Activated CD4-positive, alpha-beta T cell treated with anti-CD3 and anti-CD28 coated beads for 36 hours (primary cell): ENCODE measurements at regions of chr3 and their contacts with region 1.

Region 1: GRCh38 chr3:129316131-129317013 is 37.7 kb downstream of the HMCES start:
- DNase-seq: peak; percentile 93
- ATAC-seq: peak; percentile 39
- H3K4me3 Mint-ChIP-seq: peak overlapping the region; percentile 88
- H3K27ac Mint-ChIP-seq: peak overlapping the region; percentile 58
- H3K4me1 Mint-ChIP-seq: peaks cover 22% of the 10 kb centered on the region
- H3K27me3 Mint-ChIP-seq: no peaks in the 10 kb centered on the region

Region 2: GRCh38 chr3:128607710-128608048 is 708.7 kb before region 1 on chr3:
- CTCF ChIA-PET with region 1: no interaction called
- POLR2A ChIA-PET with region 1: no interaction called
- intact Hi-C with region 1: no loop called
- DNase-seq: no peak
- ATAC-seq: no peak
- H3K4me3 Mint-ChIP-seq: no peak overlapping the region
- H3K27ac Mint-ChIP-seq: no peak overlapping the region
- H3K4me1 Mint-ChIP-seq: no peaks in the 10 kb centered on the region
- H3K27me3 Mint-ChIP-seq: no peaks in the 10 kb centered on the region

Region 3: GRCh38 chr3:129026728-129027543 is 289.4 kb before region 1 on chr3:
- CTCF ChIA-PET with region 1: no interaction called
- POLR2A ChIA-PET with region 1: interaction called, 4 read pairs
- intact Hi-C with region 1: loop called in 1 of 2 experiments (anchors 2 kb)
- DNase-seq: peak; percentile 96
- ATAC-seq: peak; percentile 100
- H3K4me3 Mint-ChIP-seq: peak overlapping the region; percentile 72
- H3K27ac Mint-ChIP-seq: peak overlapping the region; percentile 81
- H3K4me1 Mint-ChIP-seq: peaks cover 12% of the 10 kb centered on the region
- H3K27me3 Mint-ChIP-seq: no peaks in the 10 kb centered on the region

Region 4: DNA sequence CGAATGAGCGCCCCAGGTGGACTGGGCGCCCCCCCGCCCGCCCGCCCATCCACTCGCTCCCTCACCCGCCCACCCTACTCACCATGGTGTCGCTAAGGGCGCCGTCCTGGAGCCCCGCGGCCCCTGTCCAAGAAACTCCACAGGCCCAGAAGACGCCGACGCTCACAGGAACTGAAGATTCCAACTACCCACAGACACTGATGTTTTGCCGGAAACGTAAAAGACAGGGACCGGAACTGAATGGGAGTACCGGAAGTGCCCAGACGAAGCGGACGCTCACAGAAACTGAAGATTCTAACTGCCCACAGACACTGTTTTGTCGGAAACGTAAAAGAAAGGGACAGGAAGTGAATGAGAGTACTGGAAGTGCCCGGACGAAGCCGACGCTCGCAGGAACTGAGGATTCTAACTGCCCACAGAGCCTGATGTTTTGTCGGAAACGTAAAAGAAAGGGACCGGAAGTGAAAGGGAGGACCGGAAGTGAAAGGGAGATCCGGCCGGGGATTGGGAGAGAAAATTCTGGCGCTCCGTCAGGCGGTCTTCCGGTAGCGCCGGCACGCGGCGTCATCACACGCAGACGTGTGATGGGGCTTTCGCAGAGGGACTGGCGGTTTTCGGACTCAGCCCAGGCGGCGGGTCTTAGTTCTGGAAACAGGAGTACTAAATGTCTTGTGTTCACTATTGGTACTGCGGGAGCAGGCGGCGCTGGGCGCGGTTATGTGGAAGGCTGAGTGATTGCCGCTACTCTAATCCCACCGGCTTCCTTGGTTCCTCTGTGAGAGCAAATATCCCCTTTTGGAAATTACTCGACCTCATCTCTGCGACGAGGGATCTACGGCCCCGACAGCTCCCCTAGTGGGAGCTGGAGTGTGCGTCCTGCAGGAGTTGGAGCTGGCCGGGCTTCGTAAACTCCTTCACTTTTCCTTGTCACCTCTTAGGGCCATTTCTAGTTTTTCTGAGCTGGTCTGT is 155.2 kb before region 1 on chr3 and contains the start of gene ISY1:
- CTCF ChIA-PET with region 1: interaction called, 5 read pairs
- POLR2A ChIA-PET with region 1: no interaction called
- intact Hi-C with region 1: loop called in 1 of 2 experiments (anchors 1 kb)
- DNase-seq: peak; percentile 93
- ATAC-seq: peak; percentile 81
- H3K4me3 Mint-ChIP-seq: peak within 1 kb of the TSS; percentile 93
- H3K27ac Mint-ChIP-seq: peak within 1 kb of the TSS; percentile 98
- H3K4me1 Mint-ChIP-seq: peaks cover 30% of the 10 kb centered on the region
- H3K27me3 Mint-ChIP-seq: no peaks in the 10 kb centered on the region
- total RNA-seq, gene ISY1: 44.9 to 65.5 TPM

Region 5: DNA sequence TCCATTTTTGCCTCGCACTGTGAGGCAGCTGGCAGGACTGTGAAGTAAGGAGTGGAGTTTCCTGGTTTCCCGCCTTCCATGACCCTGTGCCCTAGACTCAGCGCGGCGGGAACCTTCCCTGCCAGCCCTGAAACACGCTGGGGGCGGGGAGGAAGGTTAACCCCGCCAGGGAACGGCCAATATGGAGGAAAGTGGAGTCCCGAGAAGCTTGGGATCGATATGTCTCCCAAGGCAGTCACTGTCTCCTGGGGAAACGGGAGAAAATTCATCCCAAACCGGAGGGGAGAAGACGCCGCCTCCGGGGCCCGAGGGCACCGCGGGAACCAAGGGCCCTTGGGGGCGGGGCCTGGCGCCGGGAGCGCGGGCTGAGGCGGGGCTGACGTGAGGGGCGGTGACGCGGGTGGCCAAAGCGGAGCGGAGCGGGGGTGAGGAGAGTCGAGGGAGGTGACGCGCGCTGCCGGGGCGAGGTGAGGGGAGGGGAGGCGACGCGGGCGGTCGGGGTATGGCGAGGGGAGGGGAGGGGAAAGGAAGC is 37.9 kb before region 1 on chr3 and contains the start of gene HMCES:
- CTCF ChIA-PET with region 1: interaction called, 9 read pairs
- POLR2A ChIA-PET with region 1: interaction called, 22 read pairs
- intact Hi-C with region 1: loop called (anchors 1 kb)
- DNase-seq: peak; percentile 98
- ATAC-seq: peak; percentile 84
- H3K4me3 Mint-ChIP-seq: peak within 1 kb of the TSS; percentile 89
- H3K27ac Mint-ChIP-seq: peak within 1 kb of the TSS; percentile 95
- H3K4me1 Mint-ChIP-seq: peaks cover 55% of the 10 kb centered on the region
- H3K27me3 Mint-ChIP-seq: no peaks in the 10 kb centered on the region
- total RNA-seq, gene HMCES: 43.1 to 56.7 TPM

Region 6: GRCh38 chr3:129399145-129399894 is 82.9 kb after region 1 on chr3:
- CTCF ChIA-PET with region 1: no interaction called
- POLR2A ChIA-PET with region 1: interaction called, 4 read pairs
- intact Hi-C with region 1: loop called in 1 of 2 experiments (anchors 2 kb)
- DNase-seq: peak; percentile 90
- ATAC-seq: peak; percentile 82
- H3K4me3 Mint-ChIP-seq: peak overlapping the region; percentile 99
- H3K27ac Mint-ChIP-seq: peak overlapping the region; percentile 98
- H3K4me1 Mint-ChIP-seq: peaks cover 29% of the 10 kb centered on the region
- H3K27me3 Mint-ChIP-seq: no peaks in the 10 kb centered on the region

Region 7: DNA sequence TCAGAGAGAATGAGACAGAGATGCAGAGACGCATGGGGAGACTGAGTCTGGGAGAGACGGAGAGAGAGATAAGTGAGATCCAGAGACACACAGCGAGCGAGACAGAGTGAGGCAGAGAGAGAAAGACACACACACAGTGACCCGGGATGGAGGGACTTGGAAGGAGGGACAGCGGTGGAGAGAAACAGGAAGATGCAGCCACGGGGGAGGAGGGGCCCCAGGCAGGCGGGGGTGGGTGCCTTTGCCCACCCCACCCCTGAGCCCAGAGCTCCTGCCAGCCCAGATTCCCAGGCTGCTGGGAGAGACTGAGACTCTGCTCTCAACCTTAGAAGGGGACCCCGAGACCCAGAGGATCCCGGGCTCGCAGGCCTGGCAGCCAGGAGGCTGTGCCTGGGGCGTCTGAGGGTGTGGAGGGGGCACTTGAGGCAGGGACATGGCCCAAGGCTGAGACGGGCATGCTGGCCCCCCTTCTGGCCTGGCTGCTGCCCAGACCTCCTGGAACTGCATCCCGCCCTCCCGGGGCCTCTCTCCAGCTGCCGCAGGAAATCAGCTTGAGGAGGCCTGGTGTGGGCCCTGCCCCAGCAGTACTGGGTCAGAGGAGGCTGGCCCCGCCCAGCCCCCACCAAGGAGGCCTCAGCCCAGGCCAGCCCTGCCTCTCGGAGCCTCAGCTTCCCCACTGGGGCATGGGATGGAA is 244.7 kb after region 1 on chr3:
- CTCF ChIA-PET with region 1: no interaction called
- POLR2A ChIA-PET with region 1: no interaction called
- intact Hi-C with region 1: no loop called
- DNase-seq: no peak
- ATAC-seq: no peak
- H3K4me3 Mint-ChIP-seq: no peak overlapping the region
- H3K27ac Mint-ChIP-seq: no peak overlapping the region
- H3K4me1 Mint-ChIP-seq: no peaks in the 10 kb centered on the region
- H3K27me3 Mint-ChIP-seq: no peaks in the 10 kb centered on the region

Region 8: GRCh38 chr3:129893581-129894070 is 577.3 kb after region 1 on chr3 and contains the start of gene TMCC1:
- CTCF ChIA-PET with region 1: no interaction called
- POLR2A ChIA-PET with region 1: no interaction called
- intact Hi-C with region 1: loop called in 1 of 2 experiments (anchors 2 kb)
- DNase-seq: peak; percentile 92
- ATAC-seq: peak; percentile 92
- H3K4me3 Mint-ChIP-seq: peak within 1 kb of the TSS; percentile 86
- H3K27ac Mint-ChIP-seq: peak within 1 kb of the TSS; percentile 85
- H3K4me1 Mint-ChIP-seq: peaks cover 36% of the 10 kb centered on the region
- H3K27me3 Mint-ChIP-seq: no peaks in the 10 kb centered on the region
- total RNA-seq, gene TMCC1: 14.8 to 17.3 TPM

Region 9: GRCh38 chr3:130093741-130094391 is 777.5 kb after region 1 on chr3:
- CTCF ChIA-PET with region 1: no interaction called
- POLR2A ChIA-PET with region 1: no interaction called
- intact Hi-C with region 1: loop called in 1 of 2 experiments (anchors 10 kb)
- DNase-seq: peak; percentile 56
- ATAC-seq: peak; percentile 39
- H3K4me3 Mint-ChIP-seq: peak overlapping the region; percentile 47
- H3K27ac Mint-ChIP-seq: peak overlapping the region; percentile 70
- H3K4me1 Mint-ChIP-seq: peaks cover 26% of the 10 kb centered on the region
- H3K27me3 Mint-ChIP-seq: no peaks in the 10 kb centered on the region